ENCODE measurements at regions of chr10 and their contacts with region 1.

Region 1: DNA sequence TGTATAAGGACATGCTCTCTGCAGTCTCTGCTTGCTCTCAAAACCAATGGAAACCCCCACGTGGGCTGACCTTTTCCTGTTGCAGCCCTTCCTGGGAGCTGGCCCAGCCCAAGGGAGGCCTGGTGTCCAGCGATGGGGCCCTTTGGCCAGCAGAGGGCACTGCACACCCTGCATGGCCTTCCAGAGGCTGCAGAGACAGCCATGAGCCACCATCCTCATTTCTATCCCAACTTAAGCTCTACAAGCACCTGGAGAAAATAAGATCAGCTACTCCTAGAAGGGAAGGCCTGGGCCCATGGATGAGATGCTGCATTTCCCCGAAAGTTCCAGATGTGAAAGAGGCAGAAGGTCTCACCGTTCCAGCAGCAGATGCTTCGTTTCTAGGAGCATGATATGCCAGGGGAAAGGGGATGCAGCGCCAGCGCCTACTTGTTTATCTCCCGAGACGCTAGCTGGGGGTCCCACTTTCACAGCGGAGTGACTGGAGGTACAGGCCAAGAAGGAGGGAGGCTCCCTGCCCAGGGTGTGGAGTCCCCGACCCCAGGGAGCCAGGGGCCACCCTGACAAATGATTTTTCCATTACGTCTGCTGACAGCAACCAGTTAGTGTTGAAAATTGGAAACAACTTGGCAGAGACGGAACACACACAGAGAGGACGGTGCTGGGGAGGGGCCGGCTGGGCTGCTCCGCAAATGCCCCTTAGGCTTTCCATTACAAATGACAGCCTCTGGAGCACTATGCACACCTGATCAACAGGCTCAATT is 106.4 kb downstream of the ZRANB1 start:
- DNase-seq: no peak
- H3K4me3 ChIP-seq: no peak overlapping the region
- CTCF ChIP-seq: peak; percentile 99

Region 2: GRCh38 chr10:125020386-125020785 is 27.9 kb before region 1 on chr10:
- CTCF ChIA-PET with region 1: interaction called, 24 read pairs
- POLR2A ChIA-PET with region 1: no interaction called
- DNase-seq: no peak
- H3K4me3 ChIP-seq: no peak overlapping the region
- CTCF ChIP-seq: no peak

Region 3: DNA sequence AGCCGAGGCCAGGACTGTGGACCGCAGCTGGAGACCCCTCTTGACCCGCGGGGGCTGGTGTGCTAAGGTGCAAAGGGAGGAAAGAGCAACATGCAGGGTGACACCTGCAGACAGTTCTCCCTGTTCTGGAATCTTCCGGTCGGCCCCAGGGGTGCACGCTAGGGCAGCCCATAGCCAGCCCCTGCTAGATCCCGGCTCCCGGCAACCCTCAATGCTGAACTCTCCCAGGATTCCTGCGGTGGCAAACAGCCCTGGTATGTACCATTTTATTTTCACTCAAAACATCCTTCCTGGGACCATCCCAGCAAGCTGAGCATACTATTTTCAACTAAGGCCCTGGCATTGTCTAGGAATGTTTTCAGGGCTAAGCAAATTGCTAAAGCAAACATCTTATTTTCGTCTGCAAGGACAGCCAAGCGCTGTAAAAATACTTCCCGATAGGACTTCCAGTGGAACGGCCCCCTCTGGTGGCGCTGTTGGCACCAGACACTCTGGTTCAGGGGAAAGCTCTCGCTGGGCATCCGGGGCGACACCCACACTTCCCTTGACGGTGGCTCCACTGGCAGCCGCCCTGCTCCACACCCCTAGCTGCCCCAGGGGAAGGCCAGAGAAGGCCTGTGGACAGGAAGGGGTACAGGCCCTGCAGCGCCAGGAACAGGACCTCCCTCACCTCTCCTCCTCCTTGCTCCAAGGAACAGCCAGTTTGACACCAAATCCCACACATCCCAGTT is 12.7 kb after region 1 on chr10:
- CTCF ChIA-PET with region 1: interaction called, 261 read pairs
- POLR2A ChIA-PET with region 1: interaction called, 3 read pairs
- DNase-seq: peak; percentile 96
- H3K4me3 ChIP-seq: peak overlapping the region; percentile 13
- CTCF ChIP-seq: peak; percentile 87

Region 4: GRCh38 chr10:125152450-125153368 is 104.4 kb after region 1 on chr10:
- CTCF ChIA-PET with region 1: interaction called, 19 read pairs
- POLR2A ChIA-PET with region 1: no interaction called
- DNase-seq: no peak
- H3K4me3 ChIP-seq: no peak overlapping the region
- CTCF ChIP-seq: no peak

Region 5: DNA sequence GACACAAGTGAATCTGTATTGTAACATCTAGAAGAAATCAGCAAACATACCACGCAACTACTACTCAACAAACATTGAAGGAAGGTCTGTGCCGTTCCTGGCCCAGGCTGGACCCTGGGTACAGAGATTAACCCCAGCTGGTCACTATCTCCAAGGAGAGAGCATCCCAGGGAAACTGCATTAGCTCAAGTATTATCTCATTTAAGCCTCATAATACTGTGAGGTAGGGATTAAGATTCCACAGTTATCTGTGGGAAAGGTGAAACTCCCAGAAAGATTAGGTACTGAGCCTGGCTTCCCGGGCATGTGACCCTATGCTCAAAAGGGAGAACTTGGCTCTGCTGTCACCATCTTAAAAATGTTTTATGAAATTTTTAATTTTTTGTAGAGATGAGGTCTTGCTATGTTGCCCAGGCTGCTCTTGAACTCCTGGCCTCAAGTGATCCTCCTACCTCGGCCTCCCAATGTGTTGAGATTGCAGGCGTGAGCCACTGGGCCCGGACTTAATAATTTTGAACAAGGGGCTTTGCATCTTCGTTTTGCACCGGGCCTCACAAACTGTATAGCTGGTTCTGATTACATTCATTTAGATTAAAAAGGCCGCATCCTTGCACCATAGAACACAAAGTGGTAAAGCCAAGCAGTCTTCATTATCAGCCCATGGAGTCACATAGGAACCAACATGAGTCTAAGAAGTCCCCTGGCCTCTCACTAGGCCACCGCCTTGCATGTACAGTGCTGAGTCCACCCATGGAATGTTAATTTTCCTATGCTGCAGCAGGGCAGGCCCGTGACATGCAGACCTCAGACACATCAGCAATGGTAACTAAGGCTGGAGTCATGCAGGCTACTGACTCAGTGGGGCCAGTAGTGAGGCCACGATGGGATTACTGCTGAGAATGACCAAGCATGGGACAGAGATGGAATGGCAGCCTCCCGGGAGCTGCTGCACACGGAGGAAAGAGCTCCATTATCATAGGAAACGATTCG is 117.6 kb after region 1 on chr10:
- CTCF ChIA-PET with region 1: no interaction called
- POLR2A ChIA-PET with region 1: no interaction called
- DNase-seq: no peak
- H3K4me3 ChIP-seq: no peak overlapping the region
- CTCF ChIP-seq: no peak

Region 6: DNA sequence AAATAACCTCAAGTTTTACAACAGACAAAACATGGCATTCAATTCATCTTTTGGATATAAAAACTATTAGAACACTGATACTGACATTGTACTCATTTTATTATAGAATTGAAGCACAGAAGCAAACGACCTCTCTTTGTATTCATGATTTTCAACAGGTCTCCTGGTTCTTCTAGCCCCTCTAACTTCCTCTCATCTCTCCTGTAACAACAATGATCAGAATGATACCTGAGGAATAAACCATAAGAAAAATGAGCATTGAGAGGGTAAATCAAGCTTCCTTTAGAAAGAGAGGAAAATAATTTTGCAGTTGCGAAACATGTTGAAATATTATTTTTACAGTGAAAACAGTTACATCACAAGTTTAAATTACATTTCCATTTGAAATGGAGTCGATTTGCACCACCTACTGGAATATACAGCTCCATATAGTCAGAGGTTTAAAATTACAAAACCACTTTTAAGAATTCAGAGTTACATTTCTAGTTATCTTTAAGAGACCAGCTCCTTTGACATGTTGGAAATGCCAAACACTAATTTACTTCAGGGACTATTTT is 652.1 kb after region 1 on chr10:
- CTCF ChIA-PET with region 1: interaction called, 17 read pairs
- POLR2A ChIA-PET with region 1: no interaction called
- DNase-seq: no peak
- H3K4me3 ChIP-seq: no peak overlapping the region
- CTCF ChIP-seq: peak; percentile 13

Measured in AG04449 (cell line).